PC-3 (cell line): ENCODE measurements at regions of chr7 and their contacts with region 1.

Region 1: DNA sequence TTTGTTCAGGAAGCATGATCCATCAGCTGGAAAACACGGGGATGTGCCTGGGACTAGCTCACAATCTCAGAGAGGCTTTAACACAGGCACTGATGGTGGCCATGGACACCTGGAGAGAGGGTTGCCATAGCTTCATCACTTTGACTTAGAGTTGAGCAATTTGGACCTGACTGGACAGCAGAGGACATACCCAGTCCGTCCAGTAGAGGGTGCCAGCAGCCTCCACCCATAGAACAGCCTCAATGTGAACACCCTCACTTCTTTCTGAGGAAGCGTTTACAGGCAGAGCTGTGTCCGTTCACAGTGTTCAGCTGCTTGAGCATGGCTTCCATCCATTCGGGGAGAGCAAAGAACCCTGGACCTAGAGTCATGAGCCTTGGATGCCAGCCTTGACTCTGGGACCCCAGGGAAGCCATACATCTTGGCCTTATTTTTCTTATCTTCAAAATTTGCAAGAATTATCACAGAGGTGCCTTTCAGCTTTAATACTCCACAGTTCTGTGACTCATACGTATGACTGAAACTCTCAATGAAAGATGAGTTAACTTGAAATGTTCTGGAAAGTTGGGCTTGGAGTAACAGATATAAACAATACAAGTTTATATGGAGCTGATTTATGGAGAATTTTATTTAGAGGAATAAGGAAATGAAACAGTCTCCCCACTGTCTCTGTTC is 302.9 kb upstream of the PODXL start:
- DNase-seq: peak; percentile 77
- ATAC-seq: peak; percentile 95
- H3K4me3 ChIP-seq: peak overlapping the region; percentile 22; the same call in 1 of the 2 replicates
- H3K27ac ChIP-seq: no peak overlapping the region
- H3K4me1 ChIP-seq: peaks cover 10% of the 10 kb centered on the region
- H3K27me3 ChIP-seq: no peaks in the 10 kb centered on the region
- CTCF ChIP-seq: peak; percentile 87

Region 2: DNA sequence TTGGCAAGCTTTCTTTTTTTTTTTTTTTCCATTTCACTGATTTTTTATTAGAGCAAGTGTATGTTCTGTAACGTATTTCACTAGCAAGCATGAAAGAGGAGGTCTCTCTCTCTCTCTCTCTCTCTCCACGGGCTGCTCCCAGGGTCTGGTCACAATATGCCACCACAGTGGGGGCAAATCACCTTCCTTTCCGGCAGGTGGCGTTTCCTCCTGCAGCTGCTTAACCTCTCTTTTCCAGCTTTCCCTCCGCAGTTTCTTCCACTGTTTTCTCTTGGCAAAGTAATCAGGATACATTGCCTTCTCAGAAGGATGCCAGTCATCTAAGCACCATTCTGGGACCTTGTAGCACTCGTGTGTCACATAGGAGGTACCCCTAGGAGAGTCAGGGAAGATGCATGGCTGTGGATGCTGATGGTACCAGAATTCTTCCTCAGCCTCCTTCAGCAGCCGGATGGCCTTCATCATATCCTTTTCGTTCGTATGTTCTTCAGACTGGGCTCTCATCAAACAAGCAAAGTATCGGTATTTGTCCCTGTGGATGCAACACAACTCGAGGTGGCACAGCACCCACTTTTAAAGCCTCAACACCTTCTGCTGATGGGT is 105.6 kb before region 1 on chr7:
- CTCF ChIA-PET with region 1: interaction called, 4 read pairs
- POLR2A ChIA-PET with region 1: no interaction called
- intact Hi-C with region 1: loop called (anchors 10 kb)
- DNase-seq: peak; percentile 51
- ATAC-seq: peak; percentile 74
- H3K4me3 ChIP-seq: no peak overlapping the region
- H3K27ac ChIP-seq: no peak overlapping the region
- H3K4me1 ChIP-seq: no peaks in the 10 kb centered on the region
- H3K27me3 ChIP-seq: peaks cover 50% of the 10 kb centered on the region
- CTCF ChIP-seq: peak; percentile 72

Region 3: GRCh38 chr7:132049462-132050304 is 190.4 kb after region 1 on chr7:
- CTCF ChIA-PET with region 1: no interaction called
- POLR2A ChIA-PET with region 1: no interaction called
- intact Hi-C with region 1: loop called (anchors 1 kb)
- DNase-seq: peak; percentile 58
- ATAC-seq: no peak
- H3K4me3 ChIP-seq: no peak overlapping the region
- H3K27ac ChIP-seq: no peak overlapping the region
- H3K4me1 ChIP-seq: no peaks in the 10 kb centered on the region
- H3K27me3 ChIP-seq: no peaks in the 10 kb centered on the region
- CTCF ChIP-seq: peak; percentile 84

Region 4: GRCh38 chr7:132250883-132251653 is 391.8 kb after region 1 on chr7:
- CTCF ChIA-PET with region 1: interaction called, 3 read pairs
- POLR2A ChIA-PET with region 1: no interaction called
- intact Hi-C with region 1: loop called (anchors 10 kb)
- DNase-seq: peak; percentile 79
- ATAC-seq: peak; percentile 93
- H3K4me3 ChIP-seq: peak overlapping the region; percentile 11; the same call in 1 of the 2 replicates
- H3K27ac ChIP-seq: peak overlapping the region; percentile 68
- H3K4me1 ChIP-seq: peaks cover 29% of the 10 kb centered on the region
- H3K27me3 ChIP-seq: no peaks in the 10 kb centered on the region
- CTCF ChIP-seq: no peak